H1 (cell line): ENCODE measurements at regions of chr4 and their contacts with region 1.

Region 1: DNA sequence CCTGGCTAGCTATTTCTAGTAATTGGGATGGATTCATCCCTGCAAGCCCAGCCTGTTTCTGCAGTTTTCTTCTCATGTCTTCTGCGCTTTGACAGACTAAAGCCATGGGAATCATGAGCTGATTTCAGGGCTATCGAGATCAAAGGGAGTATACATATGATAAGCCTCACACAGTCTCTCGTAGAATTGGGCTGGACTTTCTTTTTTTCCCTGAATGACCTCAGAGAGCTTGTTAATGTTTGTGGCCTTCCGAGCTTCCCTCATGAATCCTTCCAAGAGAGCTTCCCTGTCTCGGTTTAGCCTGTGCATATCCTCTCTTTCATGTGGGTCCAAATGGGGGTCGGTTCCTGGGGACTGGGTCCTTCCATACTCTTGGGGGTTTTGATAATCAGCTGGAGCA is 130.3 kb downstream of the ADRA2C start:
- DNase-seq: no peak
- H3K4me3 ChIP-seq: no peak overlapping the region
- H3K27ac ChIP-seq: no peak overlapping the region
- H3K4me1 ChIP-seq: peaks cover 0 to 6% (median 0%) of the 10 kb centered on the region in 4 experiments; a peak in 1 of 7 replicates
- H3K27me3 ChIP-seq: no peaks in the 10 kb centered on the region
- CTCF ChIP-seq: no peak
- EP300 ChIP-seq: no peak
- POLR2A ChIP-seq: no peak
- RAD21 ChIP-seq: no peak

Region 2: DNA sequence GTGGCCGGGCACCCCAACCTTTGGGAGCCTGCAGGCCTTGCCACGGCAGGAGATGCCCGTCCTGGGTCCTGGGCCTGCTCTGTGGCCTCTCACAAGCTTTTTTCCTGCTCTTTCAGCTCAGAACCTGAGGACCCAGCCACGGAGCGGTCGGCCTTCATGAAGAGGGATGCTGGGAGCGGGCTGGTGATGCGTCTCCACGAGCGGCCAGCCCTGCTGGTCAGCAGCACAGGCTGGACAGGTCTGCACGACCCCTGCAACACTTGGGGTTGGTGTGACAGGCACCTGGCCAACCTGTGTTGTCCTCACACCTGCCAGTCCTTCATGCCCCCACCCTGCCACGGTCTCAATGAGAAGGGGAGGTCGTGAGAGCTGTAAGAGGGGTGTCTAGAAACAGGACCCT is 39.7 kb after region 1 on chr4:
- CTCF ChIA-PET with region 1: interaction called, 21 read pairs
- POLR2A ChIA-PET with region 1: no interaction called
- DNase-seq: no peak
- H3K4me3 ChIP-seq: no peak overlapping the region
- H3K27ac ChIP-seq: no peak overlapping the region
- H3K4me1 ChIP-seq: peaks cover 0 to 4% (median 3%) of the 10 kb centered on the region in 4 experiments; a peak in 4 of 7 replicates
- H3K27me3 ChIP-seq: no peaks in the 10 kb centered on the region
- CTCF ChIP-seq: no peak
- EP300 ChIP-seq: no peak
- POLR2A ChIP-seq: no peak
- RAD21 ChIP-seq: no peak